Posterior vena cava (tissue), 2 donors: ENCODE measurements at regions of chr18 and their contacts with region 1.

Region 1: GRCh38 chr18:76349067-76349715 is 145.9 kb downstream of the ZNF516 start:
- DNase-seq: no peak

Region 2: GRCh38 chr18:74652392-74652988 is 1696.7 kb before region 1 on chr18:
- intact Hi-C with region 1: loop called in 1 of 2 experiments (anchors 10 kb)
- DNase-seq: no peak

Region 3: DNA sequence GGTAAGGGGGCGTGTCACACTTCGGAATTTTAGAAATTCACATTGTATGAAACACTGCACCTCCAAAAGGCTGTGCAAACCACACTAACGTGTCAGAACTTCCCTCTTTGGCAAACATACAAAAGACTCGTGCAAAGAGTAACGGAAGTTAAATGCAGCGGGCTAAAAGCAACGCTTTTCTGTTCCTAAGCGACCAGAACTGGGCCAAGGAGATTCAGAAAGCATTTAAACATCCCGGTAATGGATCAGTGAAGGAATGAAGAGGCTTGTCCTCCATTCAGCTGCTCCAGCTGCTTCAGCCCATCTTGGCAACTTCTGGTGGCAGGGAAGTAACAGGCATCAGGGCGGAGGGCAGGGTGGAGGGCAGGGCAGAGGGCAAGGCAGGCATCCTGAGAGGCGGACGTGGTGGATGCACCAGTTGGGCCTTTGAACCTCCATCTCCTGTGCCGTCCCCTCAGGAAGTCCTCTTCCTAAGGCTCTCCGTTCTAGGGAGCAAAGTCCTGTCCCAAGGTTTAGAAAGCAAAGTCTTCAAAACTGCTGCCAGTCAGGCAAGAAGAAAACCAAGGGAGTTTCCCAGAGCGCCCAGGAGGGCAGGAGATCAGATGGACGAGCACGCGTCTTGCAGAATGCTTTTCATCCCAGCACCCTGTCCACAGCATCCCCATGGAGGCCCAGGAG is 84.9 kb before region 1 on chr18:
- intact Hi-C with region 1: loop called in 1 of 2 experiments (anchors 5 kb)
- DNase-seq: no peak